ENCODE measurements at regions of chr18 and their contacts with region 1.

Region 1: GRCh38 chr18:44679056-44679905 is 1.4 kb upstream of the SETBP1 start:
- DNase-seq: peak; percentile 73
- H3K4me3 Mint-ChIP-seq: peak overlapping the region; percentile 75
- H3K27ac Mint-ChIP-seq: peak overlapping the region; percentile 48
- H3K4me1 Mint-ChIP-seq: peaks cover 13% of the 10 kb centered on the region
- H3K27me3 Mint-ChIP-seq: peaks cover 25% of the 10 kb centered on the region

Region 2: DNA sequence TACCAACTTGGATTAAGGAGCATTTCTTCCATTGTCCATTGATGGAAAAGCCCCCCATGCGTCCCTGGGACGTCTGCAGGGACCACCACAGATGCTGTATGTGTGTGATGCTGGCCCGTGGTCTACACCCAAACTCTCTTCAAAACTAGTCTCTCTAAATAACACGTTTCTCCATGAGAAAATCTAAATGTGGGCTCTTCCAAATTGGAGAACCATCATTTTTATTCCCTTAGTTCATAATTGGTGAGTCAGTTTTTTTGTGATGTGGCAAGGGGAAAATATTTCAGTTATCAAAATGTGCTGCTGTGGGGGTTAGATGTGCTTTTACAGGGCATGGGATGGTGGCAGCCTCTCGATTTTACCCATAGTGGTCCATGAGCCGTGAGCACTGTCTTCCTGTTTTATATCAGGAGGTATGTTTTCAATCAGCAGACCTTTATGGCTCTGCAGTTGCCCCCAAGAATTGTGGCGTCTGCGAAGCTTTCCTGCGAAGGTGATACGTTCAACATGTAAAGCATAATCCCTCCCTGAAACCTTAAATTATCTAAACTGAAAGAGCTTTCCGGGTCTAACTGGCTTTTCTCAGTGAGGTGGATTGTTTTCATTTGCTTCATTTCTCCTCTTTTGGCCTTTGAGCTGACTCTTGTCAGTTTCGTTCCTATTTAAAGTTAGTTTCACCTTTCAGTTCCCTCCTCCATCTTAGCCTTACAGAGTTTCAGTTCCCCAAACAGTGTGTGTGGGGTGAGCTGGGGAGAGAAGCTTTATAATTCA is 79.8 kb after region 1 on chr18:
- intact Hi-C with region 1: loop called (anchors 1 kb)
- DNase-seq: peak; percentile 27
- H3K4me3 Mint-ChIP-seq: peak overlapping the region; percentile 53
- H3K27ac Mint-ChIP-seq: peak overlapping the region; percentile 97
- H3K4me1 Mint-ChIP-seq: peaks cover 36% of the 10 kb centered on the region
- H3K27me3 Mint-ChIP-seq: no peaks in the 10 kb centered on the region

Region 3: DNA sequence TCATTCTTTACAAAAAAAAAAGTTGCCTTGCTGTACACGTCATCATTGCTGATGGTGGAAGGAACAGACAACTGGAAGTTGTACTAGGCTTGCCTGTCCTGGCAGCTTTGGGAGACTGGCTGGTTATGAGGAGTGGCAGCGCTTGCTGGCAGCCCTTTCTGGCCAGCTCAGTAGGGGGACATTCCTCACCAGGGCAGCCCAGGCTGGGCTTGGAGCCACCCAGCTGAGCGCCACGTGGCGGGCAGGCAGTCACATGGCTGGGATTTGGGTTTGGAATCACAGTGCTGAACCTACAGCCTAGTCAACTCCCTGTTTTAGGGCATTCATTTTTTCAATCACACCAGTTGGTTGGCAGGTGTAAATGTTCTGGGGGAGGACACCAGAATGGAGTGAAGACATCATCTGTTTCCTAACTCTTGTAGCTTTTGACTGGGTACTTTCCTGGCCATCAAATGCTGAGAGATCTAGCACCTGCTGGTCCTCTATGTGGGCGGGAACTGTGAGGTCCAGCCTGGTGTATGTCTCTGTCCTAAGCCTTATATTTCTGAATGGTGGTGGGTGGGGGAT is 140.7 kb after region 1 on chr18:
- intact Hi-C with region 1: loop called (anchors 5 kb)
- DNase-seq: no peak
- H3K4me3 Mint-ChIP-seq: no peak overlapping the region
- H3K27ac Mint-ChIP-seq: no peak overlapping the region
- H3K4me1 Mint-ChIP-seq: peaks cover 29% of the 10 kb centered on the region
- H3K27me3 Mint-ChIP-seq: peaks cover 4% of the 10 kb centered on the region

Region 4: DNA sequence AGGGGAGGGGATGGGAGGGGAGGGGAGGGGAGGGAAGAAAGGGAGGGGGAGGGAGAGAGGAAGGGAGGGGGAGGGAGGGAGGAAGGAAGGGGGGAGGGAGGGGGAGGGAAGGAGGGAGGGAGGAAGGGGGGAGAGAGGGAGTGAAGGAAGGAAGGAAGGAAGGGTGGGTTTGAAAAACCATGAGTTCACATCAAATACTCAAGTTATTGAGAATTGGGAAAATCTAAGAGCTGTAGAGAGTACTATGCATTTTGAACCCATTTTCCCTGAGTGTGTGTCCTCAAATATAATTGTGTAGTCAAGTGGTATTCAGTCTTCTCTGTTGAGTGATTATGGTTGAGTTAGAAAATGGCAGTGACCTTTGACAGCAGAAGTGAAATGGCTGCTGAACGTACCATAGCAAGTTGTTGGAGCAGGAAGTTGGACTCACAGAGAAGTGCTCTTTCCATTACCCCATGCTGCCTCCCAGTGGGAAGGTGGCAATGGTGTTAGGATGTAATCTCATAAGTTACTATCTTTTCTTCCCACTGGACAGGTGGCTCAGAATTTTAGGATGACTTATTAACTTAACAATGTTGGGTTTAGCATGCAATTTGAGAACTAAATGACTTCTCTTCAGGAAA is 216.0 kb after region 1 on chr18:
- intact Hi-C with region 1: loop called (anchors 1 kb)
- DNase-seq: peak; percentile 10
- H3K4me3 Mint-ChIP-seq: no peak overlapping the region
- H3K27ac Mint-ChIP-seq: peak overlapping the region; percentile 20
- H3K4me1 Mint-ChIP-seq: peaks cover 49% of the 10 kb centered on the region
- H3K27me3 Mint-ChIP-seq: no peaks in the 10 kb centered on the region

Region 5: DNA sequence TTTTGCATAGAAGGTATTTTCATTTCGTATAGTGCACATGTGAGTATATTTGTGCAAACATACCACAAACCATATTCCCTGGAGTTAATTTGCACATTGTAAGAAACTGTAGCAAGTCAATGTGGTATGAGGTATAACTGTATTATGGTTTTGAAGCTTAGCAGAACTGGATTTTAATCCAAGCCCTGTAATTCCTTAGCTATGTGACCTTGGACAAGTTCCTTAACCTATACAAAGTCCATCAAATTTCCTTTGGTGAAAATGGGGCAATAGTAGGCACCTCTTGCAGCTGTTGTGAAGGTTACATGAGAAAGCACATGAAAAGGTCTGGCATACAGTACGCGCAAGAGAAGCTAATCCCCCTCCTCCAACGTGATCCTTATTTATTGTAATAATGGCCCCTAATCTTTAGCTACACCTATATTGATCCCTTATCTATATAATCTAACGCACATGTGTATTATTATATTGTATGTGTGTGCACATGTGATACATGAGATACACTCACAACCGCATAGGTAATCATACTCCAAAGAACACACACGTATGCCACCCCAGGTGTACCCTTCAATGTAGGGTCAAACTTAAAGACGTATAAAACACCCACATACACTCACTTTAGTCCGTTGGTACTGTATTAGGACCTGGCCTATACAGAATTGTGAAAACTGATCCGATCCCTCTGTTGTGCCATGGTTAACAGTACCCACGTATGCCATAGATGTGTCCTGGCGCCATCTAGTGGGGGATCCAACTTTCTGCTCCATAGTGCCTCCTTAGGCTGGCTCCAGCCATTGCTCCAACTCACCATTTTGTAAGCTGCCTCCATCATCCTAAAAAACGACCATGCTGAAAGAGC is 533.1 kb after region 1 on chr18:
- intact Hi-C with region 1: loop called (anchors 1 kb)
- DNase-seq: peak; percentile 59
- H3K4me3 Mint-ChIP-seq: no peak overlapping the region
- H3K27ac Mint-ChIP-seq: no peak overlapping the region
- H3K4me1 Mint-ChIP-seq: no peaks in the 10 kb centered on the region
- H3K27me3 Mint-ChIP-seq: peaks cover 10% of the 10 kb centered on the region

Measured in activated T-helper 2 cell treated with anti-CD3 and anti-CD28 coated beads, Interferon-gamma antibody, Interleukin-2, Interleukin-4, amounts not matched to agents 10 μg/mL and 5 μg/mL and 100 μg/mL, durations not matched to agents 14 hours and 24 hours and 36 hours (primary cell).